HCT116 (cell line): ENCODE measurements at regions of chr7 and their contacts with region 1.

Region 1: DNA sequence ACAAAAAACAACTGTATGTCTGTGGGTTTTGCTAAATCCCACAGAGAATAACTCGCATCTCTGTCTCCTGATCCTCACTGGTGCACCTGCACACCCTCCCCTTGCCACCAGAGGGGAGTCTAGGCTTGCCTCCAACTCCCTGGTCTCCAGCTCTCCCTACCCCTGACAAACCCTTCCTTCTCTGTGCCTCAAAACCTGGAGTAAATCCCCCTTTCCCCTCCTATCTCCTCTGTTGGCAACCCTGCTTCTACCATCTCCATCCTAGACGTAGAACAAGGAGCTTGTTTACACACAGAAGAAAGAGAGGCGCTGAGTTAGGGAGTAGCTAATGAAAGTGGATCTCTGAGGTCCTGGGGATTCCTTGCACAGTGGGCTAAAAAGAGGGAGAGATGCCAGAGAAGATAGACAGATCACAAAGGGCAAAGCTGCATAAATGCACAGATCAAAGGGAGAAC is 6.0 kb downstream of the MBLAC1 start:
- DNase-seq: no peak
- ATAC-seq: peak; percentile 81
- H3K4me3 ChIP-seq: no peak overlapping the region
- H3K27ac ChIP-seq: no peak overlapping the region
- H3K4me1 ChIP-seq: peaks cover 29 to 33% of the 10 kb centered on the region in 2 experiments
- H3K27me3 ChIP-seq: no peaks in the 10 kb centered on the region
- CTCF ChIP-seq: peak in 2 of 3 experiments; percentile 93 to 98; a peak in 4 of 6 replicates
- POLR2A ChIP-seq: no peak
- RAD21 ChIP-seq: no peak

Region 2: DNA sequence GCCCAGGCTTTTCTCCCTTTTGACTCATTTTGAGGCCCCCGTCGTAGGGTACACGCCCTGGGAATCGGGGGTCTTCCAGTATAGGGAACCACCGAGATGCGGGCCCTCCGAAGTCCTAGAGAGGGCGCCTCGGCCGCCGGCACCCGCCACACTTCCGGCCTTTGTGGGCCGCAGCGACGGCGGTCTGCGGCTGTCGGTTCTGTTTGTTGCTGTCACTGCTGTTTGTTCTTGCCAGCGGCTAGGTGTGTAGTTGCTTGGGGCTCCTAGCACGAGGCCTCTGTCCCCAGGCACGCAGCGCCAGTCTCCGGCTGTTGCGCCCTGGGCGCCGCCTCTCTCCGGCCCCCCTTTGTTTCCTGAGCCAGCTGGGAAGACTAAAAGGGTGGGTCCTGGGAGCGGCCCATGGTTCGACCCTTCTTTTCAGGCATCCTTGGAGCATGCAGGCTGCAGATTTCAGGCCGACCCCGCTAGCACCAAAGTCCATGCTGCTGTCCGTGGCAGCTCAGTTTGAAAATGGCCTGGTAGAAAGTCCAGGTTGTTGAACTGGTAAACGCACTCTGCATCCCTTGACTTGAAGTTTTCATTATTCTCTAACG is 135.1 kb before region 1 on chr7:
- CTCF ChIA-PET with region 1: interaction called, 13 read pairs
- POLR2A ChIA-PET with region 1: no interaction called
- RAD21 ChIA-PET with region 1: no interaction called
- intact Hi-C with region 1: loop called (anchors 1 kb)
- DNase-seq: no peak
- ATAC-seq: no peak
- H3K4me3 ChIP-seq: no peak overlapping the region
- H3K27ac ChIP-seq: no peak overlapping the region
- H3K4me1 ChIP-seq: peaks cover 0 to 5% of the 10 kb centered on the region in 2 experiments; a peak in 2 of 4 replicates
- H3K27me3 ChIP-seq: no peaks in the 10 kb centered on the region
- CTCF ChIP-seq: no peak
- POLR2A ChIP-seq: no peak
- RAD21 ChIP-seq: no peak

Region 3: GRCh38 chr7:100221231-100221718 is 88.6 kb after region 1 on chr7:
- CTCF ChIA-PET with region 1: interaction called, 47 read pairs
- POLR2A ChIA-PET with region 1: no interaction called
- RAD21 ChIA-PET with region 1: interaction called, 3 to 4 read pairs
- intact Hi-C with region 1: loop called (anchors 1 kb)
- DNase-seq: no peak
- ATAC-seq: no peak
- H3K4me3 ChIP-seq: no peak overlapping the region
- H3K27ac ChIP-seq: no peak overlapping the region
- H3K4me1 ChIP-seq: no peaks in the 10 kb centered on the region
- H3K27me3 ChIP-seq: no peaks in the 10 kb centered on the region
- CTCF ChIP-seq: no peak
- POLR2A ChIP-seq: no peak
- RAD21 ChIP-seq: no peak

Region 4: DNA sequence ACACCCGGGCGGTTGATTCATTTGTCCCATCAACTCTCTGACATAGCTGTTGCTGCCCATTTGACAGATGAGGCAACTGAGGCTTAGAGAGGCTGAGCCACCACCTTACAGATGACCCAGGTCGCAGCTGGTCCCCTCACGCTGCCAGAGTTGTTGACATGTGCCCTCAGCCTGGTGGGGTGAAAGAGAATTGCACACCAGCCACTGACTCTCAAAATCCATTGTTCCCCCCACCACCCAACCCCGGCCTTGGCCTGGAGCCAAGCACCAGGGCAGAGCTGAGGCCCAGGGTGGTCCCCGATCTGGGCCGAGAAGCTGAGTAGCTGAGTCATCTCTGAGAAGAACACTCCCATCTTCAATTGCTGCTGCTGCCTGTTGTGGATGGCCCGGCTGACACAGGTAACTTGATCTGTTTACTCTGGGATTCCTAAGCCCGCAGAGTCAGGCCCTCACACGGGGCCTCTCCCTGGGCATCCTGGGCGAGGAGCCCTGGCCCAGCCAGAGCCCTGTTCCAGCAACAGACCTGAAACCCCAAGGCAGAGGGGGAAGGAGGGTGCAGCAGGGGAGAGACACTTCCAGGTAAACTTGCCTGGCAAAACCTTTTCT is 114.5 kb after region 1 on chr7:
- CTCF ChIA-PET with region 1: no interaction called
- POLR2A ChIA-PET with region 1: no interaction called
- RAD21 ChIA-PET with region 1: no interaction called
- intact Hi-C with region 1: no loop called
- DNase-seq: peak; percentile 70
- ATAC-seq: peak; percentile 95
- H3K4me3 ChIP-seq: peak overlapping the region in 1 of 2 experiments; percentile 44; a peak in 2 of 4 replicates
- H3K27ac ChIP-seq: peak overlapping the region; percentile 64
- H3K4me1 ChIP-seq: peaks cover 34 to 55% of the 10 kb centered on the region in 2 experiments
- H3K27me3 ChIP-seq: no peaks in the 10 kb centered on the region
- CTCF ChIP-seq: peak in 2 of 3 experiments; percentile 19 to 26; a peak in 3 of 6 replicates
- POLR2A ChIP-seq: no peak
- RAD21 ChIP-seq: no peak; the same call in 1 of the 2 replicates

Region 5: GRCh38 chr7:100342765-100343164 is 210.0 kb after region 1 on chr7:
- CTCF ChIA-PET with region 1: interaction called, 4 read pairs
- POLR2A ChIA-PET with region 1: no interaction called
- RAD21 ChIA-PET with region 1: no interaction called
- intact Hi-C with region 1: loop called (anchors 5 kb)
- DNase-seq: no peak
- ATAC-seq: no peak
- H3K4me3 ChIP-seq: no peak overlapping the region
- H3K27ac ChIP-seq: no peak overlapping the region
- H3K4me1 ChIP-seq: peaks cover 4 to 12% of the 10 kb centered on the region in 2 experiments; a peak in 3 of 4 replicates
- H3K27me3 ChIP-seq: no peaks in the 10 kb centered on the region
- CTCF ChIP-seq: no peak
- POLR2A ChIP-seq: no peak
- RAD21 ChIP-seq: no peak

Region 6: GRCh38 chr7:100407285-100408180 is 274.8 kb after region 1 on chr7:
- CTCF ChIA-PET with region 1: interaction called, 8 read pairs
- POLR2A ChIA-PET with region 1: no interaction called
- RAD21 ChIA-PET with region 1: interaction called, 3 to 7 read pairs
- intact Hi-C with region 1: loop called (anchors 2 kb)
- DNase-seq: peak; percentile 58
- ATAC-seq: peak; percentile 96
- H3K4me3 ChIP-seq: no peak overlapping the region
- H3K27ac ChIP-seq: no peak overlapping the region
- H3K4me1 ChIP-seq: peaks cover 0 to 6% of the 10 kb centered on the region in 2 experiments; a peak in 1 of 4 replicates
- H3K27me3 ChIP-seq: peaks cover 10% of the 10 kb centered on the region; the same call in 1 of the 2 replicates
- CTCF ChIP-seq: peak; percentile 70 to 76 (median 73)
- POLR2A ChIP-seq: no peak
- RAD21 ChIP-seq: peak; percentile 87